CD14-positive monocyte (primary cell): ENCODE measurements at regions of chr15 and their contacts with region 1.

Region 1: GRCh38 chr15:74438721-74439316 is 5.1 kb upstream of the SEMA7A start:
- DNase-seq: peak; percentile 53 to 69 (median 65)
- H3K4me3 ChIP-seq: no peak overlapping the region
- H3K4me3 Mint-ChIP-seq: no peak overlapping the region
- H3K27ac ChIP-seq: no peak overlapping the region
- H3K27ac Mint-ChIP-seq: no peak overlapping the region
- H3K4me1 ChIP-seq: peaks cover 7 to 9% of the 10 kb centered on the region in 2 donors
- H3K4me1 Mint-ChIP-seq: peaks cover 10% of the 10 kb centered on the region
- H3K27me3 ChIP-seq: no peaks in the 10 kb centered on the region
- H3K27me3 Mint-ChIP-seq: peaks cover 2 to 15% (median 8%) of the 10 kb centered on the region in 3 donors
- CTCF ChIP-seq: peak; percentile 85

Region 2: DNA sequence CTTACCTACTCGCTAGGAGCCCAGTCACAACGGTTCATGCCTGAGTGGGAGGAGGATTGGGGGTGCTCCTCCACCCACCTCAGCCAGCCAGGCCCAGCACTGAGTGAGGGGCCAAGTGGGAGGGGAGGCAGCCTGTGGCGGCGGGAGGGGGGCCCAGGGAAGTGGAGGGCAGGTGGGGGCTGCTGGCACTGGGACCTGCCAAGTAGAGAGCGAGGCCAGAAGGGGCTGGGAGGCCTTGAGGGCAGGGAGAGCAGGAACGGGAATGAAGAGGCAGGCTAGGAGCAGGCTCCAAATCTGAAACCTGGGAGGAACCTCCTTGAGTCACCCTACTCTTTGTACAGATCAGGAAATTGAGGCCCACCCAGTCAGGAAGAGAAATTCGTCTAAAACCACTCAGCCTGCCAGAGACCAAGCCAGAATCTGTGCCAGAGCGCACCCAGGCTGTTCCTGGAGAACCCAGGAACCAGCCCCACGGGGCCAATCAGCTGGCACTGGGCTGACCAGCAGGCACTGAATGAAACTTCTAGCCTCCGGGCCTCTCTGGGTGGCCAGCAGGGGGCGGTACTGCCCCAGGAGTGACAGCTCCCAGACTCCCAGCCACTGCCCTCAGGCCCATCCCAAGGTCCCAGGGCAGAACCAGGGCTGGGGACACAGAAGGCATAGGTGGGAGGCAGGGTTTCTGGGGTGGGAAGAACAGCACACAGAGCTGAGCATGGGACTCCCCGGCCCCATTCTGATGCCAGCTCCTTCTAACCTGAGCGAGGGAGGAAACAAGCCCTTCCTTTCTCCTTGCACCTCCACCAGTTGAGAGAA is 56.6 kb before region 1 on chr15:
- intact Hi-C with region 1: loop called (anchors 1 to 2 kb)
- DNase-seq: peak; percentile 70 to 85 (median 81)
- H3K4me3 ChIP-seq: no peak overlapping the region
- H3K4me3 Mint-ChIP-seq: no peak overlapping the region
- H3K27ac ChIP-seq: no peak overlapping the region
- H3K27ac Mint-ChIP-seq: no peak overlapping the region
- H3K4me1 ChIP-seq: peaks cover 4 to 12% of the 10 kb centered on the region in 2 donors
- H3K4me1 Mint-ChIP-seq: peaks cover 13% of the 10 kb centered on the region
- H3K27me3 ChIP-seq: no peaks in the 10 kb centered on the region
- H3K27me3 Mint-ChIP-seq: peaks cover 2 to 15% (median 11%) of the 10 kb centered on the region in 3 donors
- CTCF ChIP-seq: peak; percentile 99

Region 3: DNA sequence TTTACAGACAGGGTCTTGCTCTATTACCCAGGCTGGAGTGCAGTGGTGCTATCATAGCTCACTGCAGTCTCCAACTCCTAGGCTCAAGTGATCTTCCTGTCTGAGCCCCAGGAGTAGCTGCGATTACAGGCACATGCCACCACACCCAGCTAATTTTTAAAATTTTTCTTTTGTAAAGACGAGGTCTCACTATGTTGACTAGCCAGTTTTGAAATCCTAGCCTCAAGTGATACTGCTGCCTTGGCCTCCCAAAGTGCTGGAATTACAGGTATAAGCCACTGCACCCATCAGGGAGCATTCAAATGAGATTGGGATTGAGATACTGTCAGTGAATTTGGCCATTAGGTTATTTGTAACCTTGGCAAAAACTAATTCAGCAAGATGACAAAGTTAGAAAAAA is 235.3 kb after region 1 on chr15:
- intact Hi-C with region 1: no loop called
- DNase-seq: no peak
- H3K4me3 ChIP-seq: no peak overlapping the region
- H3K4me3 Mint-ChIP-seq: no peak overlapping the region
- H3K27ac ChIP-seq: no peak overlapping the region
- H3K27ac Mint-ChIP-seq: no peak overlapping the region
- H3K4me1 ChIP-seq: no peaks in the 10 kb centered on the region
- H3K4me1 Mint-ChIP-seq: no peaks in the 10 kb centered on the region
- H3K27me3 ChIP-seq: no peaks in the 10 kb centered on the region
- H3K27me3 Mint-ChIP-seq: no peaks in the 10 kb centered on the region
- CTCF ChIP-seq: no peak